ENCODE measurements at regions of chr21 and their contacts with region 1.

Region 1: DNA sequence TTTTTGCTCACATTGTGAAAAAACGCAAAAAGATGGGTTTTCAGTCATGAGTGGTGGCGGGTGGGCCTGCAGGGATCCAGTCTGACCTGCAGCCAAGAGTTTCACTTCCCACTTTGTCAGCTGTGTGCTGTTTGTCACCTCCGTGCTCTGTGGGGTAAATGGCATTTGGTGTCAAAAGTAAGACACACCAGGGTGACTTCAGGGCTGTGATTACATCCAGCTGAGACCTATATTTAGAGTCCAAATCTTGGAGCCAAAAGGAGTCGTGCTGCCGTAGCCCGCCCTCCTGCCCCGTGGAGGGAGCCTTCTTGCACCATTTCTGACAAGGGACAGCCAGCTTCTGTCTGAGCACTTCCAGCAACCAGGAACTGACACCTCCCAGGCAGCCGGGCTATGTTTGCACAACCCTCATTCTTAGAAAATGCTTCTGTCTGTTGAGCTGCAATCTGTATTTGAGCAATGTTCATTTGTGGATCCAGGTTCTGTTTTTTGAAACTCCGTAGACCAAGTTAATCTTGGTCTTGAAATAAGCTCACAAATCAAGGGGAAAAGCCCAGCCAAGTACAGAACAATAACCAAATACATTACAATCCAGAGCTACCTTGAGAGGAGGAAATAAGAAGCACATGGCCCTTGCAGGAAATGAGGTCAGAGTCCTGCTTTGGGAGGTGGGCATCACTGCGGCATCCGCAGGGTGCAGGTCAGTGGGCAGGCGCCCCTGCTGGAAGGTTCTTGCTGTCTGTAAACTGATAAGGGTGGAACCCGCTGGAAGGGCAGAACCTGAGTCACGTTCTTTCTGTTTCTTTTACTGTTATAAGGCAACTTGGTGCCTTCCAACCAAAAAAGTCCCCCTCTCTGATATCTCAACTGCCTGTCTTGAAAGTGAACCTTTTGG is 14.4 kb downstream of the ABCG1 start:
- DNase-seq: peak; percentile 47 to 87
- H3K4me3 ChIP-seq: peak overlapping the region in 1 of 2 donors; percentile 73
- H3K27ac ChIP-seq: peak overlapping the region; percentile 69 to 71
- H3K4me1 ChIP-seq: peaks cover 17 to 22% of the 10 kb centered on the region in 2 donors
- H3K27me3 ChIP-seq: no peaks in the 10 kb centered on the region
- CTCF ChIP-seq: peak; percentile 26 to 53 (median 39)

Region 2: GRCh38 chr21:42176859-42177258 is 56.5 kb before region 1 on chr21:
- intact Hi-C with region 1: loop called (anchors 5 kb)
- DNase-seq: no peak
- H3K4me3 ChIP-seq: no peak overlapping the region
- H3K27ac ChIP-seq: no peak overlapping the region
- H3K4me1 ChIP-seq: no peaks in the 10 kb centered on the region
- H3K27me3 ChIP-seq: no peaks in the 10 kb centered on the region
- CTCF ChIP-seq: no peak

Region 3: GRCh38 chr21:42574234-42575027 is 341.1 kb after region 1 on chr21:
- intact Hi-C with region 1: no loop called
- DNase-seq: no peak
- H3K4me3 ChIP-seq: no peak overlapping the region
- H3K27ac ChIP-seq: no peak overlapping the region
- H3K4me1 ChIP-seq: no peaks in the 10 kb centered on the region
- H3K27me3 ChIP-seq: no peaks in the 10 kb centered on the region
- CTCF ChIP-seq: no peak

Measured in ascending aorta (tissue), 2 donors.